Activated CD4-positive, alpha-beta memory T cell treated with anti-CD3 and anti-CD28 coated beads for 36 hours (primary cell): ENCODE measurements at regions of chr2 and their contacts with region 1.

Region 1: DNA sequence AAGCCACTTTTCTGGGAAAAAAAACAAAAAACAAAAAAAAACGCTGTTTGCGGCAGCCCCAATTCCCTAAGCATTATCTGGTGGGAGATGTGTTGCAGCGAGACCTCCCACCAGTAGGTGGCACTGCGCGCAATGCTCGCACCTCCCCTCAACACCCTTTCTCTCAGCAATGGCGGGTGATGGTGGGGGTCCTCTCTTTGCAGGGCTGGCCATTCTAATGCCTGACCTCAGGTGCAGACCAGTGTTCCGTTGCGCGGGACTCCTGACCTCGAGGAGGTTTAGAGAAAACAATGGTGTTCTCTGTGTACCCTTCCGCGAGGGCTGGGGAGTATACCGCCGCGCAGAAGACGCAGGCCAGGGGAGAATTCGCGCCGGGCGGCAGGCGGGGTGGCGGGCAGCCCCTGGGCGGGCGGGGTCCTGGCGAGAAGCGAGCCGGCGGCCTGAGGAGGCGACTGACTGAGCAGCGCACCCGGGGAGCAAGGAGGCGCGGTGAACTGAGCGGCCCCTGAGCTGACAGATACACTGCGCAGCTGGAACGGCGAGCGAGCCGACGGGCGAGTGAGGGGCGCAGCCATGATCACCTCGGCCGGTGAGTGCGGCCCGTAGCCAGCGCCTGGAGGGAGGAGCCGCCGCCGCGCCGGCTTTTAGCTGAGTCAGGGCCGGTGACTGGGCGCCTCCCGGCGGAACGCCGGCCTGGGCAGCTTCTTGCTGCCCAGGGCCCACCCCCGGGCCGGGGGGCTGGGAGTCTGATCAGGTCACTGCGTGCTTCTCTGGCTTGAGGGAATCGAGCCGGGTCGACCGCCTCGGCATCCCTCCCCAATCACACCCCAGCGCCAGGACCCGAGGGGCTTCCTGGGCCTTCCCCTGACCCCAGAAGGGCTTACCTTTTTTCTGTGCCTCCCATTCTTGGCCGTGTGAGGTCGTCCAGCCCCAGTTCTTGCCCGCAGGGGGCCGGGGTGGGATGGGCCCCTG is at the start of gene PSMD1:
- DNase-seq: peak; percentile 95
- H3K4me3 Mint-ChIP-seq: peak within 1 kb of the TSS; percentile 90
- H3K27ac Mint-ChIP-seq: peak within 1 kb of the TSS; percentile 98
- H3K4me1 Mint-ChIP-seq: peaks cover 56% of the 10 kb centered on the region
- H3K27me3 Mint-ChIP-seq: peaks cover 1% of the 10 kb centered on the region
- total RNA-seq, gene PSMD1: 116 TPM

Region 2: DNA sequence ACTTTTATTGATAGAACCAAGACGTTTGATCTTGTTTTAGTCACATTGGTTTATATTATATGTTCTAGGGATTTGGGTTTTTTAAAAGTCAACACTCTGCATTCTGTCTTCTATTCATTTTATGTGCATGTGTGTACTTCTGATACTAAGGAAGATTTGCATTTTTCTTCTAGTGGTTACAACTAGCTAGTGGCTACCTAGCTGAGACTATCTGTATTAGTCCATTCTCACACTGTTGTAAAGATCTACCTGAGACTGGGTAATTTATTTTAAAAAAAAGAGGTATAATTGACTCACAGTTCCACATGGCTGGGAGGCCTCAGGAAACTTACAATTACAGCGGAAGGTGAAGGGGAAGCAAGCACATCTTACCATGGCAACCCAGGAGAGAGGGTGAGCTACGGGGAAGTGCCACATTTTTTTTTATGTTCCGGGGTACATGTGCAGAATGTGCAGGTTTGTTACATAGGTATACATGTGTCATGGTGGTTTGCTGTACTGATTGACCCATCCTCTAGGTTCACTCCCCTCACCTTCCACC is 570.9 kb before region 1 on chr2:
- CTCF ChIA-PET with region 1: no interaction called
- POLR2A ChIA-PET with region 1: no interaction called
- intact Hi-C with region 1: no loop called
- DNase-seq: no peak
- H3K4me3 Mint-ChIP-seq: no peak overlapping the region
- H3K27ac Mint-ChIP-seq: no peak overlapping the region
- H3K4me1 Mint-ChIP-seq: peaks cover 2% of the 10 kb centered on the region
- H3K27me3 Mint-ChIP-seq: no peaks in the 10 kb centered on the region

Region 3: DNA sequence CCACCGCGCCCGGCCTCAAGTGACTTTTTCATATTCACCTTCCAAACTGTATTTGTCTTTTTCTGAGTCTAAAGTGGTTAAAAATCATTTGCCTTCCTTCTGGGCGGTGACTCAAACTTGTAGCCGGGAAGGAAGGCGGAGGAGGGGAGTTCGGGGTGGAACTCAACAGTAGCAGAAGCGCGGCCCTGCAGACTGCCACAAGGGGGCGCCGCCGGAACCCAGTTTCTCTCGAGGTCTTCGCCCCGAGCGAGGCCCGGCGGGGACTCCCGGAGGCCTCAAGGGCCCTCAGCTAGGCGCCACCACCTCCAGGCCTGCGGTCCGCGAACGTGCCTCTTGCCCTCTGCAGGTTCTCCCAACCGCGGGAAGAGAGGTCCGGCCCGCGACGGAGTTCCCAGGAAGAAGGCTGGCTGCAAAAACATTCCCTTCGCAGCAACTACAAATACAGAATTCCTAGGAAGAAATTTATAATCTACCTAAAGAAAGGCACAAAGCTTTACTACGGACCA is 208.8 kb before region 1 on chr2:
- CTCF ChIA-PET with region 1: interaction called, 11 read pairs
- POLR2A ChIA-PET with region 1: no interaction called
- intact Hi-C with region 1: no loop called
- DNase-seq: peak; percentile 96
- H3K4me3 Mint-ChIP-seq: peak overlapping the region; percentile 21
- H3K27ac Mint-ChIP-seq: peak overlapping the region; percentile 33
- H3K4me1 Mint-ChIP-seq: peaks cover 20% of the 10 kb centered on the region
- H3K27me3 Mint-ChIP-seq: peaks cover 31% of the 10 kb centered on the region

Region 4: DNA sequence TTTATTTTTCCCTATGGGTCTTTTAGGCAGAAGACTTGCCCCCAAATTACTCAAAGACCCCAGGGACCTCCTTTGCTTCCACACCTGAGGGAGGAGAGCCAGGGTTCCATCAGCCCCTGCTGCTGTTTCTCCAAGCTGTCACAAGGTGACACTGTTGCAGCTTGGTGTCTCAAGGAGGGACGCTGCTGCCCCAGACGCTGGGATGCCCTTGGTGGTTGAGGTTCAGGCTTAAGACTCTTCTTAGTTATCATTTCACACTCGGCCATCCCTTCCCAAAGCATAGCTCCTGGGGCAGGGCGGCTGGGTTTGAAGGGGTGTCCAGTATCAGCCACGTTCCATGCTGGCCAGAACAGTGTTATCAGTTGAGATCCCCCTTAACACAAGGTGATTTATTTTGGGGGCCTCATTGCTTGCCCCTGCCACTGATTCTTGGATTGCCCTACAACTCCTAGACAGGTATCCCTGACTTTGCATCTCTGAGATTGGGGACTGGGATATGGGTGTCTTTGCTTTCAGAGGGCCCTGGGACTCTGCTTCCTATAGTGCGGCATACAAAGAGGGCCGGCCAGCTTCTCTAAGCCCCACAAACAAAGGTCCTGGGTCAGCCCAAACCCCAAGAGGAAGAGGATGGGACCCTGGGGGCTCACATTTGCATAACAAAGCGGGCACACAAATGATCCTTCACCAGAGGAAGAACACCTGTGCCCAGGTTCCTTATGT is 154.4 kb before region 1 on chr2:
- CTCF ChIA-PET with region 1: interaction called, 9 read pairs
- POLR2A ChIA-PET with region 1: no interaction called
- intact Hi-C with region 1: loop called (anchors 2 kb)
- DNase-seq: peak; percentile 72
- H3K4me3 Mint-ChIP-seq: no peak overlapping the region
- H3K27ac Mint-ChIP-seq: no peak overlapping the region
- H3K4me1 Mint-ChIP-seq: peaks cover 49% of the 10 kb centered on the region
- H3K27me3 Mint-ChIP-seq: peaks cover 21% of the 10 kb centered on the region

Region 5: DNA sequence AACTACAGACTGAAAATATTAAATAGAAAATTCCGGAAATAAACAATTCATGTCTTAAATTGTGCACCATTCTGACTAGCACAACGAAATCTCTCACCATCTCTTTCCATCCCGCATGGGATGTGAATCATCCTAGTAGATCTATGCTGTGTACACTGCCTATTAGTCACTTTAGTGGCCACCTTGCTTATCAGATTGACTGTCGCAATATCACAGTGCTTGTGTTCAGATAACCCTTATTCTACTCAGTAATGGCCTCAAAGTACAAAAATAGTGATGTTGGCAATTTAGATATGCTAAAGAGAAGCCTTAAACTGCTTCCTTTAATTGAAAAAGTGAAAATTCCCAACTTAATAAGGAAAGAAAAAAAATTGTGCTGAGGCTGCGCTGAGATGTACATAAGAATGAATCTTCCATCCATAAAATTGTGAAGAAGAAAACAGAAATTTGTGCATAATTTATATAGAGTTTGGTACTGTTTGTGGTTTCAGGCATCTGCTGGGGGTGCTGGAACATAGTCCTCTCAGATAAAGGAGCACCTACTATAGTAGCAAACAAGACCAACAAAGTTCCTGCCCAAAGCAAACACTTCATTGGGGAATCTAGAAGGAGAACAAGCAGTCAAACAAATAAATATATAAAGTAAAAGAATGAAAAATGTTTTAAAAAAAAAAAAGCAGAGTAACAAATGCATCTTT is 11.9 kb after region 1 on chr2:
- CTCF ChIA-PET with region 1: interaction called, 10 read pairs
- POLR2A ChIA-PET with region 1: no interaction called
- intact Hi-C with region 1: no loop called
- DNase-seq: peak; percentile 35
- H3K4me3 Mint-ChIP-seq: no peak overlapping the region
- H3K27ac Mint-ChIP-seq: no peak overlapping the region
- H3K4me1 Mint-ChIP-seq: peaks cover 16% of the 10 kb centered on the region
- H3K27me3 Mint-ChIP-seq: no peaks in the 10 kb centered on the region

Region 6: GRCh38 chr2:231104115-231104713 is 47.5 kb after region 1 on chr2:
- CTCF ChIA-PET with region 1: interaction called, 10 read pairs
- POLR2A ChIA-PET with region 1: no interaction called
- intact Hi-C with region 1: no loop called
- DNase-seq: peak; percentile 71
- H3K4me3 Mint-ChIP-seq: no peak overlapping the region
- H3K27ac Mint-ChIP-seq: peak overlapping the region; percentile 1
- H3K4me1 Mint-ChIP-seq: peaks cover 11% of the 10 kb centered on the region
- H3K27me3 Mint-ChIP-seq: no peaks in the 10 kb centered on the region